Activated T-helper 2 cell treated with anti-CD3 and anti-CD28 coated beads, Interferon-gamma antibody, Interleukin-2, Interleukin-4, amounts not matched to agents 10 μg/mL and 5 μg/mL and 100 μg/mL, durations not matched to agents 14 hours and 24 hours and 36 hours (primary cell): ENCODE measurements at regions of chr21 and their contacts with region 1.

Region 1: GRCh38 chr21:21163904-21164303 is 165.7 kb downstream of the NCAM2 start:
- DNase-seq: peak; percentile 11
- H3K4me3 Mint-ChIP-seq: no peak overlapping the region
- H3K27ac Mint-ChIP-seq: no peak overlapping the region
- H3K4me1 Mint-ChIP-seq: no peaks in the 10 kb centered on the region
- H3K27me3 Mint-ChIP-seq: peaks cover 2% of the 10 kb centered on the region

Region 2: GRCh38 chr21:21122680-21123079 is 41.2 kb before region 1 on chr21:
- intact Hi-C with region 1: no loop called
- DNase-seq: no peak
- H3K4me3 Mint-ChIP-seq: no peak overlapping the region
- H3K27ac Mint-ChIP-seq: no peak overlapping the region
- H3K4me1 Mint-ChIP-seq: no peaks in the 10 kb centered on the region
- H3K27me3 Mint-ChIP-seq: no peaks in the 10 kb centered on the region

Region 3: GRCh38 chr21:21199342-21200102 is 35.6 kb after region 1 on chr21:
- intact Hi-C with region 1: loop called (anchors 1 kb)
- DNase-seq: no peak
- H3K4me3 Mint-ChIP-seq: peak overlapping the region; percentile 3
- H3K27ac Mint-ChIP-seq: peak overlapping the region; percentile 80
- H3K4me1 Mint-ChIP-seq: peaks cover 28% of the 10 kb centered on the region
- H3K27me3 Mint-ChIP-seq: no peaks in the 10 kb centered on the region

Region 4: GRCh38 chr21:21373969-21374368 is 210.1 kb after region 1 on chr21:
- intact Hi-C with region 1: loop called (anchors 5 kb)
- DNase-seq: no peak
- H3K4me3 Mint-ChIP-seq: no peak overlapping the region
- H3K27ac Mint-ChIP-seq: no peak overlapping the region
- H3K4me1 Mint-ChIP-seq: no peaks in the 10 kb centered on the region
- H3K27me3 Mint-ChIP-seq: no peaks in the 10 kb centered on the region

Region 5: GRCh38 chr21:22791986-22792560 is 1628.2 kb after region 1 on chr21:
- intact Hi-C with region 1: loop called (anchors 10 kb)
- DNase-seq: no peak
- H3K4me3 Mint-ChIP-seq: no peak overlapping the region
- H3K27ac Mint-ChIP-seq: no peak overlapping the region
- H3K4me1 Mint-ChIP-seq: no peaks in the 10 kb centered on the region
- H3K27me3 Mint-ChIP-seq: no peaks in the 10 kb centered on the region